SK-N-SH (cell line): ENCODE measurements at regions of chr3 and their contacts with region 1.

Region 1: DNA sequence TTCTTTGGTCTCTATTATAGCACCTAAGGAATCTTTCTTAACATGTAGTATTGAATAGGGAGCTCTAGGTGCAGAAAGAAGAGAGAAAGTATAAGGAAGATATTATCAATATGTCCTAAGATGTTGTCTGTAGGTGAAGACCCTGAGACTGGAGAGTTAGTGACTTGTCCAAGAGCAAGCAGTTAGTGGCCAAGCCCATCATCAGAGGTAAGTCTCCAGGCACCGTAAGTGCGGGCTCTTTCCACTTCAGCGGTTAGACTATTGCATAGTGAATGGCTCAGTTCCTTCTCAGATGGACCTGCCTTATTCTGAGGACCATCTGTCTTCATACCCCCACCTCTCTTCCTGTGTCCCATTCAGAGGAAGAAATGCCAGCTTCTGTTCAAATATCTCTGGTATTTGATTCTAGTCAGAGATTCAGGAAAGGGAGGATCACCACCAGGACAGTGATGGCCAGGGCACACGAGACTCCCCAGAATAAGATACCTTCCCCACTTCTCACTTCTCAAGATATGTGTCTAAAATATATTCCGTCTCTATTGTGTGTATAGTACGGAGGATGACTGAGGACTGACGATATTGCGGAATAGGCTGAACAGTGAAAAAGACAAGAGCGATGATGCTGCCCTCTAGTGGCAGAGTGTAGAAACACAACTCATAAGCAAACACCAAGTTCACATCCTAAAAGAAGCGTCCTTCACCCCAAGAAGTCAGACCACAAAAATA is 19.1 kb upstream of the ADGRG7 start:
- DNase-seq: peak; percentile 68
- H3K4me3 ChIP-seq: peak overlapping the region; percentile 7 to 20; a peak in 1 of 4 replicates
- H3K27ac ChIP-seq: no peak overlapping the region
- H3K4me1 ChIP-seq: peaks cover 0 to 5% of the 10 kb centered on the region in 2 experiments; a peak in 1 of 4 replicates
- H3K27me3 ChIP-seq: no peaks in the 10 kb centered on the region
- CTCF ChIP-seq: peak; percentile 92
- EP300 ChIP-seq: no peak
- RAD21 ChIP-seq: peak; percentile 96

Region 2: GRCh38 chr3:100455841-100456550 is 134.3 kb before region 1 on chr3:
- CTCF ChIA-PET with region 1: interaction called, 224 read pairs
- POLR2A ChIA-PET with region 1: no interaction called
- DNase-seq: no peak
- H3K4me3 ChIP-seq: no peak overlapping the region
- H3K27ac ChIP-seq: no peak overlapping the region
- H3K4me1 ChIP-seq: no peaks in the 10 kb centered on the region
- H3K27me3 ChIP-seq: no peaks in the 10 kb centered on the region
- CTCF ChIP-seq: no peak
- EP300 ChIP-seq: no peak
- RAD21 ChIP-seq: no peak

Region 3: DNA sequence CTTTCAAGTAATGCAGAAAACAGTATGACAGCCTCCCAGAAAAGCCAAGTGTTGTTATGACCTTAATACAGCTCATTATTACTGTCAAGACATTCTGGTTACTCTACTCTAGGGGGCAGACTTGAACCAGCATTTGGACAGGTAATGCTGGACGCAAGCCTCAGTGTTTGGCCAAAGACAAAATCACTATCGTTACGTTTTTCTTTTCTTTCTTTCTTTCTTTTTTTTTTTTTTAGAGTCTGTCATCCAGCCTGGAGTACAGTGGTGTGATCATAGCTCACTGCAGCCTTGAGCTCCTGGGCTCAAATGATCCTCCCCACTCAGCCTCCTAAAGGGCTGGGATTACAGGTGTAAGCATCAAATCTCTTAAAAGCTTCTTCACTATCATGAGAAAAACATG is 127.3 kb before region 1 on chr3:
- CTCF ChIA-PET with region 1: interaction called, 224 read pairs
- POLR2A ChIA-PET with region 1: interaction called, 4 read pairs
- DNase-seq: peak; percentile 69
- H3K4me3 ChIP-seq: peak overlapping the region in 1 of 2 experiments; percentile 21; a peak in 1 of 4 replicates
- H3K27ac ChIP-seq: no peak overlapping the region
- H3K4me1 ChIP-seq: 0 out of 4 replicates have a peak, but pooled peaks cover 0 to 2% of the 10 kb centered on the region in 2 experiments
- H3K27me3 ChIP-seq: no peaks in the 10 kb centered on the region
- CTCF ChIP-seq: peak; percentile 86
- EP300 ChIP-seq: no peak
- RAD21 ChIP-seq: peak; percentile 97

Region 4: GRCh38 chr3:100492059-100493006 is 97.9 kb before region 1 on chr3 and contains the start of gene TMEM45A:
- CTCF ChIA-PET with region 1: interaction called, 10 read pairs
- POLR2A ChIA-PET with region 1: no interaction called
- DNase-seq: peak; percentile 99
- H3K4me3 ChIP-seq: peak within 1 kb of the TSS; percentile 70 to 96
- H3K27ac ChIP-seq: peak within 1 kb of the TSS; percentile 90 to 95
- H3K4me1 ChIP-seq: peaks cover 0 to 7% of the 10 kb centered on the region in 2 experiments; a peak in 2 of 4 replicates
- H3K27me3 ChIP-seq: no peaks in the 10 kb centered on the region
- CTCF ChIP-seq: no peak
- EP300 ChIP-seq: no peak
- RAD21 ChIP-seq: no peak
- polyA plus RNA-seq, gene TMEM45A: 6.4 and 10.8 TPM in 2 replicates

Region 5: DNA sequence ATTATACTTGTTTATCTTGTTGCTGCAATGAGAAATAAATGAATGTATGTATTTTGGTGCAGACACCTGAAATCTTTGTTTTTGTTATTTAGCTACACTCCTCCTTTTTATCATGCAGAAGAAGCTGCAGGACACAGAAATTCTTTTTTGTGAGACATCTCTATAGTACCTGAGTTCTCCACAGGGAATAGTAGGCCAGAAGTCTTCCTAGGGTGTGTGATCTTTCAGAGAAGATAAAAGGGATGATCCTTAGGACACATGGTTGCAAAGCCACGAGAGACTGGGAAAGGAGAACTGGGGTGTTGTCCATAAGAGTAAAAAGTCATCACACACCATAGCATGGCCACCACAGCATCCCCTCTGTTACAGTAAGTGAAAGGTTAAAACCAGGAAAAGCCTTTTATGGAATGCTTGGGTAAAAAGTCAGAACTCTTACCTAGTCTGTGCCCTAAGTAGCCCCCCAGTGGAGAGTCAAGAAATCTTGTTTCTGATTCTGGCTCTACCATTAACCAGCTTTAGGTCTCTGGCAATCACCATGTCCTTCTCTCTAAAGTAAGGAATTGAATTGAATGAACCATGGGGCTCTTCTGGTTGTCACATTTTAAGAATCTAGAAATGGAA is 12.8 kb before region 1 on chr3:
- CTCF ChIA-PET with region 1: interaction called, 48 read pairs
- POLR2A ChIA-PET with region 1: no interaction called
- DNase-seq: no peak
- H3K4me3 ChIP-seq: no peak overlapping the region
- H3K27ac ChIP-seq: no peak overlapping the region
- H3K4me1 ChIP-seq: no peaks in the 10 kb centered on the region
- H3K27me3 ChIP-seq: no peaks in the 10 kb centered on the region
- CTCF ChIP-seq: no peak
- EP300 ChIP-seq: no peak
- RAD21 ChIP-seq: no peak

Region 6: DNA sequence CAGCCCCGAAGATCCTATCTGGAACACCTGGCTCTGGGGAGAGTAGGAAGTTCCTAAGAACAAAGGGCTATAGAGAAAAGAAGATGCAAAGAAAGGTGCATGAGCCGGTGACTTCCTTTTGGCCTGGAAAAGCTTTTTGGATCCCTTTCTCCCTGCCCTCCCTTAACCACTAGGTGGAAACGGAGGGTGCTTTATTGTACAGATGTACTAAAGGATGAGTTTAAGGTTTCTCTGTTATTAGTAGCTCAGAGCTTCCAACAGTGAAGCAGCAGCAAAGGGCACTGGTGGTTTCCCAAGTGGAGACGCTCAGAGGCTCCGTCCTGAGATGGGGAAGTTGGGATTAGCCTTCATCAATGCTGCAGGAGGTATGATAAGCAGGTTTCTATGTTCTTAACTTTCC is 13.2 kb after region 1 on chr3:
- CTCF ChIA-PET with region 1: interaction called, 15 read pairs
- POLR2A ChIA-PET with region 1: no interaction called
- DNase-seq: peak; percentile 40
- H3K4me3 ChIP-seq: no peak overlapping the region
- H3K27ac ChIP-seq: peak overlapping the region in 1 of 2 experiments; percentile 25; a peak in 1 of 4 replicates
- H3K4me1 ChIP-seq: no peaks in the 10 kb centered on the region; a peak in 3 of 4 replicates
- H3K27me3 ChIP-seq: no peaks in the 10 kb centered on the region
- CTCF ChIP-seq: peak; percentile 62
- EP300 ChIP-seq: no peak
- RAD21 ChIP-seq: peak; percentile 68

Region 7: DNA sequence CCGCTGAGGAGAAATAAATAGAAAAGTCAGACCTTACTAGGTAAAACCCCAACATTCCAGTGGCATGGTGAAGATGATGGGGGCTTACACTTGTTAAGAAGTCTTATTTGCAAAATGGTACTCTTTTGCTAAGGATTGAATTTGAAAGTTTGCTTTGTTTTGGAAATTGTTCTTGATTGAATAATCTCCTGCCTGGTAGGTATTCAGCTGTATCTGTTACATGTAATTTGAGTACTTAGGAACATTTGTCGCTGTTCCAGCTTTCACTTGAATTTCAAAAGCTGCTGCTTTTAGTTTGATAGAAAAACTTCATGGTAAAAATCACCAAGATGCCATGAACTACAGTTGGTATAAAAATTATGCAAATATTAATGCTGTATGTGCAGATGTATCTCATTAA is 163.6 kb after region 1 on chr3:
- CTCF ChIA-PET with region 1: no interaction called
- POLR2A ChIA-PET with region 1: no interaction called
- DNase-seq: no peak
- H3K4me3 ChIP-seq: no peak overlapping the region
- H3K27ac ChIP-seq: no peak overlapping the region
- H3K4me1 ChIP-seq: no peaks in the 10 kb centered on the region; a peak in 1 of 4 replicates
- H3K27me3 ChIP-seq: no peaks in the 10 kb centered on the region
- CTCF ChIP-seq: no peak
- EP300 ChIP-seq: no peak
- RAD21 ChIP-seq: no peak

Region 8: GRCh38 chr3:100796556-100796955 is 206.3 kb after region 1 on chr3:
- CTCF ChIA-PET with region 1: no interaction called
- POLR2A ChIA-PET with region 1: no interaction called
- DNase-seq: no peak
- H3K4me3 ChIP-seq: no peak overlapping the region
- H3K27ac ChIP-seq: no peak overlapping the region
- H3K4me1 ChIP-seq: peaks cover 0 to 7% of the 10 kb centered on the region in 2 experiments; a peak in 2 of 4 replicates
- H3K27me3 ChIP-seq: no peaks in the 10 kb centered on the region
- CTCF ChIP-seq: peak; percentile 49
- EP300 ChIP-seq: no peak
- RAD21 ChIP-seq: 0 out of 2 replicates have a peak, but pooled peaks have one; percentile 15